AG04450 (cell line): ENCODE measurements at regions of chr12 and their contacts with region 1.

Region 1: DNA sequence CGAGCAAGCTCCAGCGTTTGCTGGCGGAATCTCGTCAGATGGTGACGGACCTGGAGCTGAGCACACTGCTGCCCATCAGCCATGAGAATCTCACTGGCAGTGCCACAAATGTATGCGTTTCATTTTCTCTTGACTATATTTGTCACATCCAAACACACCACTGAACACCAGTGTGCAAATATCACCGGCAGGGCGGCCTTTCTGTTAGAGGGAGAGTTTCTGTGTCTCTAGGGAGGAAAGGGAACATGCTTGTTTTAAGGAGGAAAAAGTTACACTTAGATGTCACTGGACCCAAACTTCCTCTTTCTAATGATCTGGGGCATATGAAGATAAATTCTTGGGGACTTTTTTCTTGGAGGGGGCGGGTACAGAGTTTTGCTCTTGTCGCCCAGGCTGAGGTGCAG is 21.9 kb upstream of the HIP1R start:
- DNase-seq: no peak
- H3K4me3 ChIP-seq: no peak overlapping the region
- H3K27ac ChIP-seq: no peak overlapping the region
- H3K27me3 ChIP-seq: no peaks in the 10 kb centered on the region
- CTCF ChIP-seq: no peak

Region 2: GRCh38 chr12:122851820-122852219 is 38.5 kb after region 1 on chr12:
- CTCF ChIA-PET with region 1: no interaction called
- POLR2A ChIA-PET with region 1: no interaction called
- DNase-seq: peak; percentile 57
- H3K4me3 ChIP-seq: no peak overlapping the region
- H3K27ac ChIP-seq: peak overlapping the region; percentile 58
- H3K27me3 ChIP-seq: no peaks in the 10 kb centered on the region
- CTCF ChIP-seq: no peak

Region 3: DNA sequence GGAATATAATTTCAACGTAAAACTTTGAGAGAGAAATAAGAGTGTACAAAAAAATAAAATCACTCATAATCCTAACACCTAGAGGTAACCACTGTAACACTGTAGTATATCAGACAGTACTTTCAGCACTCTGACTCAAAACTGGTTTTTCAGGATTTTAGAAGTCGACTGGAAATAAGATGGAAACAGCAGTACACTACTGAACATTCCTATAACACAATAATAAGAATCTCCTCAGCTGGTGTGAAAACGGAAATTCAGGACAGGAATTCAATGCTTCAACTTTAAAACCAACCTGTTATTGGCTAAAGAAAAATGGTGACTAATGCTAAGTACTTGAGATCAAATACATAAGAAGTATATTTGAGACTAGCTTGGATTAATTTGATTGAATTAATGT is 349.9 kb after region 1 on chr12:
- CTCF ChIA-PET with region 1: no interaction called
- POLR2A ChIA-PET with region 1: interaction called, 10 read pairs
- DNase-seq: no peak
- H3K4me3 ChIP-seq: no peak overlapping the region
- H3K27ac ChIP-seq: no peak overlapping the region
- H3K27me3 ChIP-seq: no peaks in the 10 kb centered on the region
- CTCF ChIP-seq: no peak